T-cell (primary cell): ENCODE measurements at regions of chr10 and their contacts with region 1.

Region 1: GRCh38 chr10:101617102-101617823 is 29.1 kb downstream of the DPCD start:
- DNase-seq: no peak
- ATAC-seq: no peak
- H3K4me3 ChIP-seq: no peak overlapping the region
- H3K4me3 Mint-ChIP-seq: no peak overlapping the region
- H3K27ac ChIP-seq: no peak overlapping the region
- H3K27ac Mint-ChIP-seq: peak overlapping the region; percentile 31 to 53
- H3K4me1 ChIP-seq: no peaks in the 10 kb centered on the region
- H3K4me1 Mint-ChIP-seq: peaks cover 0 to 6% (median 6%) of the 10 kb centered on the region in 3 donors
- H3K27me3 ChIP-seq: no peaks in the 10 kb centered on the region
- H3K27me3 Mint-ChIP-seq: no peaks in the 10 kb centered on the region

Region 2: GRCh38 chr10:101569838-101570766 is 47.2 kb before region 1 on chr10:
- CTCF ChIA-PET with region 1: no interaction called
- POLR2A ChIA-PET with region 1: no interaction called
- DNase-seq: peak; percentile 43 to 88 (median 72)
- ATAC-seq: peak; percentile 83 to 91 (median 89)
- H3K4me3 ChIP-seq: peak overlapping the region; percentile 58 to 76
- H3K4me3 Mint-ChIP-seq: peak overlapping the region; percentile 72 to 73 (median 72)
- H3K27ac ChIP-seq: no peak overlapping the region
- H3K27ac Mint-ChIP-seq: no peak overlapping the region
- H3K4me1 ChIP-seq: peaks cover 7 to 27% of the 10 kb centered on the region in 2 experiments
- H3K4me1 Mint-ChIP-seq: peaks cover 7 to 17% (median 11%) of the 10 kb centered on the region in 3 donors
- H3K27me3 ChIP-seq: peaks cover 12 to 54% of the 10 kb centered on the region in 2 experiments
- H3K27me3 Mint-ChIP-seq: peaks cover 38 to 42% of the 10 kb centered on the region in 2 donors

Region 3: GRCh38 chr10:101655570-101655969 is 38.3 kb after region 1 on chr10:
- CTCF ChIA-PET with region 1: no interaction called
- POLR2A ChIA-PET with region 1: interaction called in 1 of 2 experiments, 11 read pairs
- DNase-seq: no peak
- ATAC-seq: no peak
- H3K4me3 ChIP-seq: no peak overlapping the region
- H3K4me3 Mint-ChIP-seq: no peak overlapping the region
- H3K27ac ChIP-seq: no peak overlapping the region
- H3K27ac Mint-ChIP-seq: no peak overlapping the region
- H3K4me1 ChIP-seq: peaks cover 0 to 4% of the 10 kb centered on the region in 2 experiments
- H3K4me1 Mint-ChIP-seq: peaks cover 1 to 13% (median 5%) of the 10 kb centered on the region in 3 donors
- H3K27me3 ChIP-seq: no peaks in the 10 kb centered on the region
- H3K27me3 Mint-ChIP-seq: no peaks in the 10 kb centered on the region